Calu3 (cell line): ENCODE measurements at regions of chr10 and their contacts with region 1.

Region 1: GRCh38 chr10:64626924-64627323 is 1105.7 kb downstream of the REEP3 start:
- DNase-seq: peak; percentile 72
- H3K4me3 Mint-ChIP-seq: peak overlapping the region; percentile 64
- H3K27ac Mint-ChIP-seq: peak overlapping the region; percentile 71
- H3K4me1 Mint-ChIP-seq: peaks cover 36% of the 10 kb centered on the region
- H3K27me3 Mint-ChIP-seq: no peaks in the 10 kb centered on the region
- CTCF ChIP-seq: no peak

Region 2: GRCh38 chr10:64115913-64116643 is 510.8 kb before region 1 on chr10:
- CTCF ChIA-PET with region 1: no interaction called
- intact Hi-C with region 1: loop called (anchors 10 kb)
- DNase-seq: peak; percentile 54
- H3K4me3 Mint-ChIP-seq: no peak overlapping the region
- H3K27ac Mint-ChIP-seq: no peak overlapping the region
- H3K4me1 Mint-ChIP-seq: peaks cover 26% of the 10 kb centered on the region
- H3K27me3 Mint-ChIP-seq: no peaks in the 10 kb centered on the region
- CTCF ChIP-seq: peak; percentile 40

Region 3: DNA sequence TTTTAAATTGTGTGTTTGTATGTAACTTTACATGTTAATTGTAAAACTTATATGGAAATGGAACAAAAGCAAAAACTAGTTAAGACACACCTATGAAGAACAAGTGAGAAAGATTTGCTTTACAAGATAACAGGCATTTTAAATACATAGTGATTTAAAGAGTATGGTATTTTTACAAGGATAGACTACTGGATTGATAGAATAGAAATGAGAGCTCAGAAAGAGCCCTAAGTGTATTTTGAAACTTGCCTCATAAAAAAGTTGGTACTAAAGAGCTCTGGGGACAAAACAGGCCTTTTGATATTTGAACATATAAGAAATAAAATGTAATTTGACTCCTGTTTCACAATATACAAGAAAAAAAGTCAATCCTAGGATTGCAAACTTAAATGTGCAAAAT is 177.3 kb before region 1 on chr10:
- CTCF ChIA-PET with region 1: no interaction called
- intact Hi-C with region 1: loop called (anchors 5 kb)
- DNase-seq: no peak
- H3K4me3 Mint-ChIP-seq: no peak overlapping the region
- H3K27ac Mint-ChIP-seq: no peak overlapping the region
- H3K4me1 Mint-ChIP-seq: peaks cover 9% of the 10 kb centered on the region
- H3K27me3 Mint-ChIP-seq: no peaks in the 10 kb centered on the region
- CTCF ChIP-seq: no peak

Region 4: DNA sequence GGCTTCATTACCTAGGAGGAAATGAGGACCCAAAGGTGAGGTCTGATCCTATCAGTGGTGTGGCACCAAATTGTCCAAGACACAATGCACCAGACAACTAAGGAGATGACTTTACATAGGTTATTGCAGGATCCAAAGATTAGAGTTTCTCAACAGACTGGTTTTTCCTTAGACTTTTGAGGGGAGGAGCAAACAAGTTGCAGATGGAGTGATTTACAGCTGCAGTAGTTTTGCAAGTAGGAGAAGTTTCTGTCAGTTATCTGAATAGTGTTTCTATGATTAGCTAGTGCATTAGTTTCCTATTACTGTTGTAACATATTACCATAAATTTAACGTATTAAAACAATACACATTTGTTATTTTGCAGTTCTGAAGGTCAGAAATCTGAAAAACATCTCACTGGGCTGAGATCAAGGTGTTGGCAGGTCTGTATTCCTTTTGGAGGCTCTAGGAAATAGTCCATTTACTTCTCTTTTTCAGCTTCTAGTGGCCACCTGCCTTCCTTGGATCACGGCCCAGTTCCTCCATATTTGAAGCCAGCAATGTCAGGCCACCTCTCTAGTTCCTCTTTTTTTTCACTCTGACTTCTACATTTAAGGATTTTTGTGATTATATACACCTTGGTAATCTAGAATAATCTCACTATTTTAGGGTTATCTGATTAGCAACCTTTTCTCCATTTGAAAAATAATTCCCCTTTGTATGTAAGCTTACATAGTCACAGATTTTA is 110.8 kb before region 1 on chr10:
- CTCF ChIA-PET with region 1: no interaction called
- intact Hi-C with region 1: loop called (anchors 2 kb)
- DNase-seq: no peak
- H3K4me3 Mint-ChIP-seq: no peak overlapping the region
- H3K27ac Mint-ChIP-seq: peak overlapping the region; percentile 57
- H3K4me1 Mint-ChIP-seq: peaks cover 43% of the 10 kb centered on the region
- H3K27me3 Mint-ChIP-seq: no peaks in the 10 kb centered on the region
- CTCF ChIP-seq: no peak

Region 5: DNA sequence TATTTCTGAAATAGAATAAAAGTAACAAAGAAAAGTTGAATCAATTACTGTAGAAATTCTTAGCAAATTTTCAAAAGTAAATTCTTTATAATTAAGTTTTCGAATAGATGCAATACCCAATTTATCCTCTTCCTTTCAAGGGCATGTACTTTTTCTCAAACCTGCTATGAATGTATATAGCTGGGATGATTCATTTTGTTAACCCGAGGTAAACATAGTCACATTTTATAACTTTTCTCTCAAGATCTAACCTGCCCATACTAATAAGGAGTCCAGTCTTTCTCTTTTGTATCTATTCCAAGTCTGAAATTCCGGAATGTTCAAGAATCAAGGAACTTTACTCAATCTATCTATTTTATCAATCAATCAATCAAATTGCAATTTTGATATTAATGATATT is 32.9 kb before region 1 on chr10:
- CTCF ChIA-PET with region 1: no interaction called
- intact Hi-C with region 1: no loop called
- DNase-seq: no peak
- H3K4me3 Mint-ChIP-seq: no peak overlapping the region
- H3K27ac Mint-ChIP-seq: no peak overlapping the region
- H3K4me1 Mint-ChIP-seq: no peaks in the 10 kb centered on the region
- H3K27me3 Mint-ChIP-seq: no peaks in the 10 kb centered on the region
- CTCF ChIP-seq: no peak

Region 6: GRCh38 chr10:65751218-65751617 is 1124.3 kb after region 1 on chr10:
- CTCF ChIA-PET with region 1: no interaction called
- intact Hi-C with region 1: loop called (anchors 10 kb)
- DNase-seq: peak; percentile 25
- H3K4me3 Mint-ChIP-seq: no peak overlapping the region
- H3K27ac Mint-ChIP-seq: no peak overlapping the region
- H3K4me1 Mint-ChIP-seq: peaks cover 17% of the 10 kb centered on the region
- H3K27me3 Mint-ChIP-seq: no peaks in the 10 kb centered on the region
- CTCF ChIP-seq: no peak